ENCODE measurements at regions of chr17 and their contacts with region 1.

Region 1: GRCh38 chr17:42843358-42843934 is 934 bp upstream of the AOC2 start:
- DNase-seq: peak; percentile 69
- H3K4me3 ChIP-seq: no peak overlapping the region
- H3K27ac ChIP-seq: no peak overlapping the region
- H3K4me1 ChIP-seq: no peaks in the 10 kb centered on the region
- H3K27me3 ChIP-seq: no peaks in the 10 kb centered on the region
- CTCF ChIP-seq: peak; percentile 91 to 92
- POLR2A ChIP-seq: no peak

Region 2: GRCh38 chr17:41942621-41943373 is 900.6 kb before region 1 on chr17:
- CTCF ChIA-PET with region 1: no interaction called
- POLR2A ChIA-PET with region 1: interaction called, 10 read pairs
- dilution Hi-C with region 1: no loop called
- intact Hi-C with region 1: no loop called
- DNase-seq: no peak
- H3K4me3 ChIP-seq: no peak overlapping the region
- H3K27ac ChIP-seq: no peak overlapping the region
- H3K4me1 ChIP-seq: no peaks in the 10 kb centered on the region
- H3K27me3 ChIP-seq: peaks cover 0 to 2% of the 10 kb centered on the region in 2 experiments
- CTCF ChIP-seq: no peak
- POLR2A ChIP-seq: no peak

Region 3: DNA sequence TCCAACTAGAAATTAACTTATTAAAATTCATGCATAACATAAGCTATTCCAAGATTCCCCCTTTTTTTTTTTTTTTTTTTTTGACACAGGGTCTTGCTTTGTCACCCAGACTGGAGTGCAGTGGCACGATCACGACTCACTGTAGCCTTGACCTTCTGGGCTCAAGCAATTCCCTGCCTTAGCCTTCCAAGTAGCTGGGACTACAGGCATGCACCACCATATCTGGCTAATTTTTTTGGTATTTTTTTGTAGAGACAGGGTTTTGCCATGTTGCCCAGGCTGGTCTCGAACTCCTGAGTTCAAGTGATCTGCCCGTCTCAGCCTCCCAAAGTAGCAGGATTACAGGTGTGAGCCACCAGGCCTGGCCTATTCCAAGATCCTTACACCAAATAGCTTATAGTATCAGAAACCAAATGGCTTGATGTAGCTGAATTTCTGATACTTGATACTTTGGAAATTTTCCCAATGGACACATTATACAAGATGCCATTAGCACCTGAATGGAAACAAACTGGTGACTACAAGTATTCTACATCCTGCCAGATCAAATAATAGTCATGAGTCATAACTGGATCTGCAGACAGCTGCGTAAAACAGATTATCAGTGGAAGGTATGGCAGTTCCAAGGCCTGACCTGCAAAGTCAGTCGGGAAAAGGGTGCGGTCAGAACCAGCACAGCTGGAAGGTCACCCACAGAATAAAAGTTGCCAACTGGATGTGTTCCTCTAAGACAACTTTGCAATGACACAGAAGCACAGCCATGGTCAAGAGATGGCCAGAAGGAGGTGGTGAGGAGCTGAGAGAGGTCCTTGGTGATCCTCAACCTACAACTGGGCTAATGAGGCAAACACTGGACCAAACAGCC is 219.5 kb before region 1 on chr17:
- CTCF ChIA-PET with region 1: no interaction called
- POLR2A ChIA-PET with region 1: no interaction called
- dilution Hi-C with region 1: no loop called
- intact Hi-C with region 1: no loop called
- DNase-seq: peak; percentile 57
- H3K4me3 ChIP-seq: no peak overlapping the region
- H3K27ac ChIP-seq: no peak overlapping the region
- H3K4me1 ChIP-seq: peaks cover 7% of the 10 kb centered on the region
- H3K27me3 ChIP-seq: no peaks in the 10 kb centered on the region
- CTCF ChIP-seq: no peak
- POLR2A ChIP-seq: no peak

Region 4: DNA sequence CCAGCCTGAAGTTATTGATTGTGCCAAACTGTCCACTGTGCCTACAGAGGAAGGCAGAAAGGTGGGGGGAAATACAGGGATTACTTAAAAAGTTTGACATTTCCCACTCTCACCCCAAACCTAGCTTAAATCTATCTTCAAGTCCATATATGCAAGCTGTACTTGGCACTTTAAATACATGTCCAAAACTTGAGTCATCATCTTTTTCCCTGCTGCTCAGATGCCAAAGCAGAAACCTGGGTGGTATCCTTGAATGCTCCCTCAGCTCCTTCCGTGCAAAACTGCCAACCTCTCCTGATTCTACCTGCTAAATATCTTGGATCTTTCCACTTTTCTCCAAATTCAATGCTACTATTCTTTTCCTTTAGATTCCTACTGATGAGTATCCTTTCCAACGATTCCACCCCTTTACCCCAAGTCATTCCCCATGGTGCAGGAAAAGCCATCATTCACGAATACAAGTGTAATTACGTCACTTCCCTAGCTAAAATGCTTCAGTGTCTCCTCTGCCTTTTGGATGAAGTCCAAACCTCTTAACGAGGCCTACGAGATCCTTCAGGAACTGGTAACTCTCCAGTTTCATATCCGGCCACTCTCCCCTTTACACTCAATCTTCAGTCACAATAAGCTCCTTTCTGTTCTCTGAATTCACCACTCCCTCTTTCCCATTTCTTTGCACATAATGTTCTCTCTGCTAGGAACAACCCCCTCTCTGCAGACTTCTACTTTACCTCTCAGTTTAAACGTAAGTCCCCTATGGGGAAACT is 28.6 kb before region 1 on chr17:
- CTCF ChIA-PET with region 1: no interaction called
- POLR2A ChIA-PET with region 1: no interaction called
- dilution Hi-C with region 1: no loop called
- intact Hi-C with region 1: no loop called
- DNase-seq: peak; percentile 63
- H3K4me3 ChIP-seq: no peak overlapping the region
- H3K27ac ChIP-seq: peak overlapping the region; percentile 41
- H3K4me1 ChIP-seq: peaks cover 20% of the 10 kb centered on the region
- H3K27me3 ChIP-seq: no peaks in the 10 kb centered on the region
- CTCF ChIP-seq: no peak
- POLR2A ChIP-seq: no peak

Region 5: DNA sequence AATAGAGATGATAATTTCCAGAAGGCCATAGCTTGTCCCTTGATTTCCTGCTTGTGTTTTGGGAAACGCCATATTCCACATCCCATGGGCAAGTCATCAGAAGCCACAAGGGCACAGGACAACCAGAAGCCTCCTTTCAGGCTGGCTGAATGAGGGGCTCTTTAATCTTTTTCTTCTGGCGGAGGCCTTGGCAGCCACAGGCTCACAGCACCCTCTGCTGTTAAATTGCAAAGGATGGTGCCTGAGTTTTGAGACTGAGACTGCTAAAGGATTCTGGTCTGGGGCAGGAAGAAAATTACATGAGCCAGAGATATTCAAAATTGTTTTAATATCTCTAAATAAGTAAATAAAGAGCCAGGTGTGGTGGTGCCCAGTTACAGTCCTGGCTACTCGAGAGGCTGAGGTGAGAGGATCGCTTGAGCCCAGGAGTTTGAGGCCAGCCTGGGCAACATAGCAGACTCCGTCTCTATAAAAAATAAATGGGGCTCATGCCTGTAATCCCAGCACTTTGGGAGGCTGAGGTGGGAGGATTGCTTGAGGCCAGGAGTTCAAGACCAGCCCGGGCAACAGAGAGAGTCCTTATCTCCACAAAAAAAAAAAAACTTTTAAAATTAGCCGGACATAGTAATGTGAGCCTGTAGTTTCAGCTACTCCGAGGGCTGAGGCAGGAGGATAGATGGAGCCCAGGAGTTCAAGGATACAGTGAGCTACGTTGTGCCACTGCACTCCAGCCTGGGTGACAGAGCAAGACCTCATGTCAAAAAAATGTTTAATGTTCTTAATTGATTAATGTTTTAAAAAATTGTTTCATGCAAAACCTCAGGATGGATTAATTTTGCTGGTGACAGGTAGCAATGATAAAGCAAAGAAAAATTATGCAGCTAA is 94.5 kb after region 1 on chr17:
- CTCF ChIA-PET with region 1: interaction called, 122 read pairs
- POLR2A ChIA-PET with region 1: no interaction called
- dilution Hi-C with region 1: no loop called
- intact Hi-C with region 1: loop called (anchors 1 kb)
- DNase-seq: peak; percentile 65
- H3K4me3 ChIP-seq: no peak overlapping the region
- H3K27ac ChIP-seq: no peak overlapping the region
- H3K4me1 ChIP-seq: no peaks in the 10 kb centered on the region
- H3K27me3 ChIP-seq: peaks cover 0 to 2% of the 10 kb centered on the region in 2 experiments
- CTCF ChIP-seq: peak; percentile 62 to 69
- POLR2A ChIP-seq: no peak

Region 6: GRCh38 chr17:42944211-42944610 is 100.8 kb after region 1 on chr17:
- CTCF ChIA-PET with region 1: interaction called, 122 read pairs
- POLR2A ChIA-PET with region 1: no interaction called
- dilution Hi-C with region 1: no loop called
- intact Hi-C with region 1: no loop called
- DNase-seq: peak; percentile 37
- H3K4me3 ChIP-seq: no peak overlapping the region
- H3K27ac ChIP-seq: no peak overlapping the region
- H3K4me1 ChIP-seq: no peaks in the 10 kb centered on the region
- H3K27me3 ChIP-seq: no peaks in the 10 kb centered on the region
- CTCF ChIP-seq: no peak
- POLR2A ChIP-seq: no peak

Measured in endothelial cell of umbilical vein (primary cell).